ENCODE measurements at regions of chr2 and their contacts with region 1.

Region 1: GRCh38 chr2:164061129-164061746 is 325.4 kb upstream of the FIGN start:
- DNase-seq: peak in 2 of 10 donors; percentile 10 to 51
- H3K4me3 ChIP-seq: no peak overlapping the region
- H3K27ac ChIP-seq: no peak overlapping the region
- H3K27me3 ChIP-seq: no peaks in the 10 kb centered on the region
- CTCF ChIP-seq: peak; percentile 41 to 86 (median 72)

Region 2: DNA sequence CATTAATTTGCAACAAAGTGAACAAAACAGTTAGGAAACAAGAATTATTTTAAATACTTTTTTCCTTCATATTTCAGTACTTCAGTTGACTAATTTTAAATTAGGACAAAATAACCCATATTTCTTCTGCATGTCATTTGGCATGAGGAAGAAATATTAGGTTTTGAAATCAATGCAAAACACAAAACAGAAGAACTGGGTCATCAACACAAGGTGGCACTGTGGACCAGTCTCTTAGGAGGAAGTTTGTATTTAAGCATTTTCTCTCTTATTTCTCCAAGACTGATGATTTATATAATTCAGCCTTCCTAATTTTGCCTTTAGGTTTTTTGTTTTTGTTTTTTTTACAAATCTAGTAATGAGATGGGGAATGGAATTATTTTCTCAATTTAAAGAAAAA is 869.9 kb before region 1 on chr2:
- intact Hi-C with region 1: loop called in 1 of 2 experiments (anchors 10 kb)
- DNase-seq: peak in 1 of 10 donors; percentile 22
- H3K4me3 ChIP-seq: no peak overlapping the region
- H3K27ac ChIP-seq: no peak overlapping the region
- H3K27me3 ChIP-seq: no peaks in the 10 kb centered on the region
- CTCF ChIP-seq: peak; percentile 35 to 81 (median 66)

Region 3: DNA sequence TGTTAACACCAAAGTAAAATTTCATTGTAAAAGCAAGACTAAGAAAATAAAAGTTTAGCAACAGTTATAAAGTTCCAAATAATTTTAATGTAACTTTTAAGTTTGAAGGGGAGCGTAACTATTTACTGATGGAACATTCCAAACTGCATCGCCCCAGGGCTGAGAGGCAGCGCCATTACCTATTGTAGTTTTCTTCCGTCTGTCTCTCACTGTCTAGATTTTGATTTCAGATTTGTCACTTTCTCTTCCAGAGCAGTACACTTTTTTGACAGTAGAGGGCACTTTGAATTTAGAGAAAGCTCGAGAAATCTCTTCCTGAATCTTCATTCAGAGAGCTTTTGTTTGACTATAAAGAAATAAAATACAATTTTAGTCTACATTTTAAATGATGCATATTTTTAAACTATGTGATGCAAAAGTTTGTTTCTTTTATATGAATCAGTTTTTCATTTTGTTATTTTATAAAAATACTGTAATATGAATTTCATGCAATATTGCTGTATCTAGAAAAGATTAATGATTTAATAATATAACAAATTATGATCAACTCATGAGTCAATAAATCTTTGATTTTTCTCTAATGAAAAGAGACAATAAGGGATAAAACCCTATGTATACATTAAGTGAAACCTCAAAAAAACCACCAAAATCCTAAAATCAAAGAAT is 715.2 kb before region 1 on chr2:
- intact Hi-C with region 1: loop called (anchors 5 kb)
- DNase-seq: peak in 1 of 10 donors; percentile 26
- H3K4me3 ChIP-seq: peak overlapping the region in 1 of 59 donors; percentile 30
- H3K27ac ChIP-seq: peak overlapping the region in 1 of 59 donors; percentile 4
- H3K27me3 ChIP-seq: no peaks in the 10 kb centered on the region
- CTCF ChIP-seq: peak; percentile 79 to 96 (median 89)

Region 4: GRCh38 chr2:163471947-163472346 is 589.3 kb before region 1 on chr2:
- intact Hi-C with region 1: loop called in 1 of 2 experiments (anchors 2 kb)
- DNase-seq: no peak
- H3K4me3 ChIP-seq: no peak overlapping the region
- H3K27ac ChIP-seq: no peak overlapping the region
- H3K27me3 ChIP-seq: peaks cover 0 to 22% (median 3%) of the 10 kb centered on the region in 45 donors
- CTCF ChIP-seq: peak in 34 of 56 donors; percentile 8 to 54 (median 33)

Region 5: DNA sequence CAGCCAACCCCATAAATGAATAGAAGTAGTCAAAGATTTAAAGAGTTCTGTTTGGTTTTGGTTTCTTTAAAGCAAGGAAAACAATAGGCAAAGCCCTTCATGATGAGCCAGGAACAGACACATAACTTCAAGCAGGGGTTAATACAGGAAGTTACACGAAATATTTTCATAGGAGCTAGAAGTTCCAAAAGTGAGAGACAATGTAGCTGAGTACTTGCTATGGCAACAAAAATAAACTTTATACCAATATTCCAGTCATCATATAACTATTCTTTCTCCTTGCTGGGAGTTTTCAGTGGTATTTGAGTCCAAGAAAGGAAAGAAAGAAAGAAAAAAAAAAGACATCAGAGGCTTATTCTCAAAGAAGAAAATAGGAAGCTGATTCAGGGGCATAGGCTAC is 724.2 kb after region 1 on chr2:
- intact Hi-C with region 1: no loop called
- DNase-seq: no peak
- H3K4me3 ChIP-seq: no peak overlapping the region
- H3K27ac ChIP-seq: peak overlapping the region in 37 of 59 donors; percentile 10 to 81 (median 55)
- H3K27me3 ChIP-seq: no peaks in the 10 kb centered on the region
- CTCF ChIP-seq: no peak

Measured in dorsolateral prefrontal cortex (tissue), 120 donors.